HepG2 (cell line): ENCODE measurements at regions of chr12 and their contacts with region 1.

Region 1: GRCh38 chr12:46661110-46661845 is 164.5 kb downstream of the SLC38A4 start:
- DNase-seq: peak; percentile 77
- ATAC-seq: peak; percentile 88
- H3K4me3 ChIP-seq: no peak overlapping the region
- H3K27ac ChIP-seq: peak overlapping the region; percentile 5
- H3K4me1 ChIP-seq: peaks cover 53% of the 10 kb centered on the region
- H3K27me3 ChIP-seq: no peaks in the 10 kb centered on the region
- CTCF ChIP-seq: peak; percentile 78
- EP300 ChIP-seq: no peak; a peak in 1 of 4 replicates
- POLR2A ChIP-seq: no peak
- RAD21 ChIP-seq: peak; percentile 75

Region 2: GRCh38 chr12:45852508-45852907 is 808.8 kb before region 1 on chr12:
- CTCF ChIA-PET with region 1: no interaction called
- POLR2A ChIA-PET with region 1: no interaction called
- in situ Hi-C with region 1: no loop called
- intact Hi-C with region 1: no loop called
- DNase-seq: no peak
- ATAC-seq: no peak
- H3K4me3 ChIP-seq: no peak overlapping the region
- H3K27ac ChIP-seq: no peak overlapping the region
- H3K4me1 ChIP-seq: no peaks in the 10 kb centered on the region
- H3K27me3 ChIP-seq: no peaks in the 10 kb centered on the region
- CTCF ChIP-seq: no peak
- EP300 ChIP-seq: no peak
- POLR2A ChIP-seq: no peak
- RAD21 ChIP-seq: no peak

Region 3: DNA sequence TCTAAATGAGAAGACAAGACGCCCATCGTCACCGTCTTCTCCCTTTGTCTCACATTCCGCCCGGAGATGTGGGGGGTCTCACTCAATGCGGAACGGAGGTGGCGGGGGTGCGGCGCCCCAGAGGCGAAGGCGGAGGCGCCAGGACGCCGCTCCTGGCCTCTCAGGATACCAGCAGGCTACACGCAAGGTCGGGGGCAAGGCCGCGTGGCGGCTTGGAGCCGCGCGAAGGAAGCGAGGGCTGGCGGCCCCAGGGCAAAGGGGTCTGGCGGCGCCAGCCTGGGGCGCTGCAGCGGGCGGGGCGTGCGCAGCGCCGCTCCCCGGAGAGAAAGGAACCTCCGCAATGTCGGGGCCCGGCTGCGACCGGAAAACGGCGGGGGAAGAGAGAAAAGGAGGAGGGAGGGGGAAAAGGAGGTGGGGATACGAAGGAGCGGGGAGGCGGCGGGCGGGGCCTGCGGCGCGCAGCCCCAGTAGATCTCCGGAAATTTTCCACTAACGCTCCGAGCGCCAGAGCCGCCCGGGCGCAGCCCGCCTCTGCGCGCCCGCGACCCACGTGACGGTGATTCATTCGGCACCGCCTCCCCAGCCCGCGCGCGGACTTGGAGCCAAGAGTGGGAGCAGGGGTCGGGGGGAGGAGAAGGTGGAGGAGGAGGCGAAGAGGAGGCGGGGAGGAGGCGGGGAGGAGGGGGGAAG is 278.2 kb before region 1 on chr12:
- CTCF ChIA-PET with region 1: no interaction called
- POLR2A ChIA-PET with region 1: interaction called, 3 read pairs
- in situ Hi-C with region 1: no loop called
- intact Hi-C with region 1: loop called (anchors 2 kb)
- DNase-seq: peak; percentile 93
- ATAC-seq: peak; percentile 87
- H3K4me3 ChIP-seq: peak overlapping the region; percentile 67 to 90 (median 73); a peak in 5 of 6 replicates
- H3K27ac ChIP-seq: peak overlapping the region; percentile 98
- H3K4me1 ChIP-seq: peaks cover 68% of the 10 kb centered on the region
- H3K27me3 ChIP-seq: no peaks in the 10 kb centered on the region; a peak in 1 of 5 replicates
- CTCF ChIP-seq: peak; percentile 60
- EP300 ChIP-seq: peak; percentile 39 to 86; a peak in 2 of 4 replicates
- POLR2A ChIP-seq: peak in 1 of 2 experiments; percentile 65; a peak in 2 of 4 replicates
- RAD21 ChIP-seq: peak; percentile 72

Region 4: GRCh38 chr12:46523863-46524770 is 137.2 kb before region 1 on chr12:
- CTCF ChIA-PET with region 1: no interaction called
- POLR2A ChIA-PET with region 1: interaction called, 9 read pairs
- in situ Hi-C with region 1: loop called (anchors 10 kb)
- intact Hi-C with region 1: no loop called
- DNase-seq: peak; percentile 92
- ATAC-seq: peak; percentile 89
- H3K4me3 ChIP-seq: peak overlapping the region; percentile 29 to 52 (median 38); a peak in 5 of 6 replicates
- H3K27ac ChIP-seq: peak overlapping the region; percentile 59
- H3K4me1 ChIP-seq: peaks cover 65% of the 10 kb centered on the region
- H3K27me3 ChIP-seq: no peaks in the 10 kb centered on the region
- CTCF ChIP-seq: no peak
- EP300 ChIP-seq: peak in 1 of 2 experiments; percentile 83; a peak in 2 of 4 replicates
- POLR2A ChIP-seq: peak in 1 of 2 experiments; percentile 38; a peak in 1 of 4 replicates
- RAD21 ChIP-seq: no peak

Region 5: GRCh38 chr12:46577063-46577776 is 84.1 kb before region 1 on chr12:
- CTCF ChIA-PET with region 1: no interaction called
- POLR2A ChIA-PET with region 1: interaction called, 5 read pairs
- in situ Hi-C with region 1: no loop called
- intact Hi-C with region 1: loop called (anchors 5 kb)
- DNase-seq: peak; percentile 89
- ATAC-seq: peak; percentile 90
- H3K4me3 ChIP-seq: no peak overlapping the region
- H3K27ac ChIP-seq: peak overlapping the region; percentile 77
- H3K4me1 ChIP-seq: peaks cover 69% of the 10 kb centered on the region
- H3K27me3 ChIP-seq: no peaks in the 10 kb centered on the region
- CTCF ChIP-seq: no peak
- EP300 ChIP-seq: peak in 1 of 2 experiments; percentile 84; a peak in 2 of 4 replicates
- POLR2A ChIP-seq: no peak
- RAD21 ChIP-seq: no peak

Region 6: GRCh38 chr12:46722394-46723185 is 61.3 kb after region 1 on chr12:
- CTCF ChIA-PET with region 1: no interaction called
- POLR2A ChIA-PET with region 1: no interaction called
- in situ Hi-C with region 1: no loop called
- intact Hi-C with region 1: no loop called
- DNase-seq: no peak
- ATAC-seq: no peak
- H3K4me3 ChIP-seq: no peak overlapping the region
- H3K27ac ChIP-seq: no peak overlapping the region
- H3K4me1 ChIP-seq: no peaks in the 10 kb centered on the region
- H3K27me3 ChIP-seq: no peaks in the 10 kb centered on the region
- CTCF ChIP-seq: no peak
- EP300 ChIP-seq: no peak
- POLR2A ChIP-seq: no peak
- RAD21 ChIP-seq: no peak